ENCODE measurements at regions of chr10 and their contacts with region 1.

Region 1: DNA sequence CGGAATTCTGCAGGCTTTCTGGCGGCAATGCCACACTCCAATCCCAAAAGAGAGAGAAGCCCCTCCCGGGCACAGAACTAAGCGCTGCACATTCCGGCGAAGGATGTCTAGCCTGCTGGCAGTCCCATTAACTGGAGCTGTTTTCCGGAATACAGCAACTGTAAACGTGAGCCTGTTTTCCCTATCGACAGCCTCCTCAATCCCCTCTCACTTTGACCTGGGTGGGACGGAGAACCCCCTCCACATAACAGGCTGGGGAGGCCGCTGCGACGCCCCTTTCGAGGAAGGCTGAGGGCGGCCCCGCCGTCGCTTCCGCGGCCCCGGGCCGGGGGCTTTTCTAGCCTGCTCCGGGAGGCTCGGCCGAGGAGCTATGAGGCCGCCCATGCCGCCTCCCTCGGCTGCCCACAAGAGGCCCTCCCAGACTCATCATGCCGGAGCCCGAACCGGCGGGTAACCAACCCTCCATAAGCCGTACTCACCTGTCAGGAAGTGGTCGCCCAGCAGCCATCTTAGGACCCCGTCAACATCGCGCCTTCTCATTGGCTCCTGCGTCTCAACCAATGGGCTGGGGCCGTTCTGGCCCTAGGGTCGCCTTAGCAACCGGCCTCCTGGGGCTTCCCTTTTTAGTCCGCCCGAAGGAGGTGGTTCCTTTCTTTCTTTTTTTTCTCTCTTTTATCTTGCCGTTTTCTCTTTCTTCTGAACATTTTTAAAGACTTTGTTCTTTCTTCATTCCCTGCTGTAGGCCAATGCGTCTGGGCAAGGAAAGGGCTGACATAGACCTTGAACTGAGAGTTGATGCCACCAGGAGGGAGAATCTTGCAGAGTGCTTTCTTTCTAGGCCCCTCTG is at the start of gene FAM204A:
- DNase-seq: peak; percentile 95
- H3K4me3 Mint-ChIP-seq: peak within 1 kb of the TSS; percentile 94
- H3K27ac Mint-ChIP-seq: peak within 1 kb of the TSS; percentile 82
- H3K4me1 Mint-ChIP-seq: peaks cover 20% of the 10 kb centered on the region
- H3K27me3 Mint-ChIP-seq: peaks cover 3% of the 10 kb centered on the region
- total RNA-seq, gene FAM204A: 53.1 and 55.6 TPM in 2 replicates

Region 2: DNA sequence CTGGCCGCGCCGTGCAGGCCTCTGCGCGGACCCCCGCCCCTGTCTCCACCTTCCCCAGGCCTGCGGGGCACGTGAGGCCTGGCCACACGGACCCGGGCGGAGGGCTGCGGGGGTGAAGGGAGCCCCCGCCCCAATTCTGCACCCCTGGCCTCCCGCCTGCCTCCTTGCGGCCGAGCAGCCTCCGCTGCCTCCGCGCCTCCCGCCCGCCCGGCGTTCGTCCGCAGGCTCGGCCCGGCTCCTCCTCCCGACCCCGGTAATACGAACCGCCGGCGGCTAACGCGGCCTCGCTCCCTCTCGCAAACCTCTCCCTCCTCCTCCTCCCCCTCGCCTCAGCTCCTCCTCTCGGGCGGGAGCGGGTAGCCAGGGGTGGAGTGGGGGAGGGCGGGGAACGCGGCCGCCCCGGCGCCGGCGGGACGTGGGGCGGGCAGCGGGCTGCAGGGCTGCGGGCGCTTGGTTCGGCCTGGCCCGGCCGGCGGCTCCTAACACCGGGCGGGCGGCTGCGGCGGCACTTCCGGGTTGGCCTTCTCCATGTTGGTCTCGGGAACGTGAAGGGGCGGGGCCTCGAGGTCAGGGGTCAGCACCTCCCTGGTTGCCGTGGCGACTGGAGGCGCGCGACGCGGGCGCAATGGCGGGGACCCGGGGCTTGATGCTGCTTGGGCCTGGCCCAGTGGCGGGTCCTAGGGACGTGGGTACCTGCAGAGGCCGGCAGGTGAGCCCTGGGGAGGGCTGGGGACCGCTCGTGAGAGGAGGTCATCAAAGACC is 295.4 kb before region 1 on chr10 and contains the start of gene RAB11FIP2:
- intact Hi-C with region 1: loop called (anchors 10 kb)
- DNase-seq: peak; percentile 92
- H3K4me3 Mint-ChIP-seq: peak within 1 kb of the TSS; percentile 91
- H3K27ac Mint-ChIP-seq: peak within 1 kb of the TSS; percentile 76
- H3K4me1 Mint-ChIP-seq: peaks cover 23% of the 10 kb centered on the region
- H3K27me3 Mint-ChIP-seq: peaks cover 11% of the 10 kb centered on the region
- total RNA-seq, gene RAB11FIP2: 11.2 and 13.8 TPM in 2 replicates